HAP-1 (cell line): ENCODE measurements at regions of chr15 and their contacts with region 1.

Region 1: DNA sequence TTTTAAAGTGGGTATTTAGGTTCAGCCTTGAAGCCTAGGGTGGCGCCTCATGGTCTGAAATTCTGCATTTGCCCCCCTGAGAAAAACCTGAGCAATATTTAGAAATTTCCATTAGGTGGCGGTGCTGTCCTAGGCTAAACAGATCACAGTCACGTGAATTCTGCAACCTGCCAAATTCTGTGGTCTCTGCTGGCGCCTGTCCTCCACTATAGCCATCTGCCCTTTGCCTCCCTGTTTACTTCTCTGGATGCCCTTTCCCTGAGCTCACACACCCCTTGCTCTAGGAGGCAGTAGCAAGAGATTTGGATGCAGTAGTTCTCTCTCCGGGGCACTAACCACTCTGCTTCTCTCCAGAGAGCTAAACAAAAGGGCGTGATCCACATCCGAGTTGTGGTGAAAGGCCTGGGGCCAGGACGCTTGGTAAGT is 9.1 kb downstream of the MRPS11 start:
- DNase-seq: peak; percentile 82 to 91
- H3K4me3 ChIP-seq: no peak overlapping the region
- H3K4me1 ChIP-seq: no peaks in the 10 kb centered on the region; the same call in 1 of the 2 replicates
- H3K27me3 ChIP-seq: no peaks in the 10 kb centered on the region

Region 2: DNA sequence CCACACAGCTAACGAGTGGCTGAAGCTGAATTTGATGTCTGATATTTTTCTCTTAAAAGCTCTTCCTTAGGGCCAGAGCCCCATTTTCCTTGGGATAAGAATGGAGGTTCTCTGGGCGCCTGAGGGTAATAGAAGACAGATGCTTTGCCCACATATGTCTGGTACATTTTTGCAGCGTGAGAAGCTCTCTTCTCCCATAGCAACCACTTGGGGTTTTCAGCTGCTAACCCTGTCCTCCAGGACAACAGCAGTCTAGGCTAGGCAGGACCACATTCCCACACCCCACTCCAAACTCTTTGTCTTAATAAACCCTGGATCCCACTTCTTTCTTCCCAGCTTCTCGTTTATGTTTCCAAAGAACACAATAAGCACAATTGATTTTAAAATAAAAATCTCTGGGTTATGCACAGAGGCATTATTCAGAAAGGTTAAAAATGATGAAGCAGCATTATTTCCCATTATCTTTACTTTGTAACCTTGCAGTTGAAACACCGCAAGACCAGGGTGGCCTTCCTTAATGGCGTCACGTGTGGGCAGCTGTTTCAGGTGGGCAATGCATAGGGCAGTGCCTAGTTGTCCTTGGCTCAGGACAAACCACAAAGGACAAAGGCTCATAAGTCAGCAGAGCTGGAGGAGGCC is 163.6 kb before region 1 on chr15:
- in situ Hi-C with region 1: no loop called
- DNase-seq: no peak
- H3K4me3 ChIP-seq: no peak overlapping the region
- H3K4me1 ChIP-seq: no peaks in the 10 kb centered on the region
- H3K27me3 ChIP-seq: no peaks in the 10 kb centered on the region

Region 3: DNA sequence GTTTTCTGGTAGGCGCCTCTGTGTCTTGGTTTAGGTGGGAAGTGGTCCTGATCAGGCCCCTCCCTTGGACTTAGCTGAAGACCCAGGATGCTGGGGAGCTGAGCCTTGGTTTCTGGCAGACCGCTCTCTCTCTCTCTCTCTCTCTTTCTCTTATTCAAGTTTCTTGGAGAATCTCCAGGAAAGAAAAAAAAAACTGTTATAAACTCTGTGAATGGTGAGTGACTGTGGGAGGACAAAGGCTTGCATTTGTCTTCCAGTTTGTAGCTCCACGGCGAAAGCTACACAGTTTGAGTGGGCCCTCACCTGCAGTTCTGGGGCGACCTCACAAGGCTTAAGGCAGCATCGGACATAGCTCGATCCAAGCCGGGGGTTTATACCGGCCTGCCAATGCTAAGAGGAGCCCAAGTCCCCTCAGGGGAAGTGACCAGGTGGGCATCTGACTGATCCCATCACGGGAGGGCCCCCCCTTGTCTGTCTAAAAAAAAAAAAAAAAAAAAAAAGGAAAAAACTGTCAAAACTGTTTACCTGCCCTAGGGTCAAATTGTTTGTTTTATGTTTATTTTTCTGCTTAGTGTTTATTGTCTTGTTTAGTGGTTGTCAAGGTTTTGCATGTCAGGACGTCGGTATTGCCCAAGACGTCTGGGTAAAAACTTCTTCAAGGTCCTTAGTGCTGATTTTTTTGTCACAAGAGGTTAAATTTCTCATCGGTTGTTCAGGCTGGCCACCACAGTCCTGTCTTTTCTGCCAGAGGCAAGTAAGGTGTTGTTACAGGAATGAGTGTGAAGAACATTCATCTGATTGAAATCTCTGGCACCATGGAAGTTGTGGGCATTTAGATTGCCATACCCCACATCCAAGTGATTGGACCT is 62.6 kb after region 1 on chr15:
- in situ Hi-C with region 1: loop called (anchors 5 kb)
- DNase-seq: peak; percentile 45 to 47
- H3K4me3 ChIP-seq: no peak overlapping the region
- H3K4me1 ChIP-seq: peaks cover 37% of the 10 kb centered on the region
- H3K27me3 ChIP-seq: no peaks in the 10 kb centered on the region

Region 4: DNA sequence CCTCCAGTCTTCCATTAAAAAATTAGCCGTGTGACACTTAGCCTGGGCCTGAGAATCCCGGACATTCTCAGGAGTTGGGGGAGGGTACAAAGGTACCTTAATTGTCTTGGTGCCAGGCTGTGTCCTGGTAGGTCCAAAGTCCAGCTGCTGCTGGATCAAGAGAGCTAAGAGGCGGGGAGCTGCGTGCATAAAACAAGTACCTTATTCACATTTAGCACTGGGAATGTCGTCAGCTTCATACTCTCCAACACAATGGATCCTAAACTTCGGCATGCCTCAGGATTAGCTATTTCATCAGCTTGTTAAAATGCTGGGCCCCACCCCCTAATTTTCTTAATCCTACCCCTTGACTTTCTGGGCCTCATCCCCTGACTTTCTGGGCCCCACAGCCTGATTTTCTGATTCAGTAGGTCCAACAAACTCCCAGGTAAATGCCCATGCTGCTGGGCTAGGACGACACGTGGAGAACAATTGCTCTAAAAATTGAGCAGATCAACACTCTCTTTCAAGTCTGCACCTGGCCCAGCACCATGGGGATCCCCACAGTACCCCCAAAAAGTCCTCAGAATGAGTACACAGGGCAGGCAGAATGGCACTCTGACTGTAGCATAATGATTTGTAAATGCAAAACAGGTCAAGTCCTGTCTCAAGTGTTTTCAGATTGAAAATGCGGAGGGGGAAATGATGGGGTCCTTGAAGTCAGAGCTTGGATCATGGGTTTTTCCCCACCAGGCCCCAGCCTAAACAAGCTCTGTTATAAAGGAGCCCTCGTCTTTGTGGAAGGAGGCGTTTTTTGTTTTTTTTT is 138.9 kb after region 1 on chr15:
- in situ Hi-C with region 1: loop called (anchors 5 kb)
- DNase-seq: peak; percentile 81 to 92
- H3K4me3 ChIP-seq: no peak overlapping the region
- H3K4me1 ChIP-seq: peaks cover 61% of the 10 kb centered on the region
- H3K27me3 ChIP-seq: peaks cover 6% of the 10 kb centered on the region; the same call in 1 of the 2 replicates